Activated T-helper 2 cell treated with anti-CD3 and anti-CD28 coated beads, Interferon-gamma antibody, Interleukin-2, Interleukin-4, amounts not matched to agents 10 μg/mL and 5 μg/mL and 100 μg/mL, durations not matched to agents 14 hours and 24 hours and 36 hours (primary cell): ENCODE measurements at regions of chr18 and their contacts with region 1.

Region 1: GRCh38 chr18:29041976-29042375 is 865.0 kb upstream of the CDH2 start:
- DNase-seq: no peak
- H3K4me3 Mint-ChIP-seq: no peak overlapping the region
- H3K27ac Mint-ChIP-seq: no peak overlapping the region
- H3K4me1 Mint-ChIP-seq: no peaks in the 10 kb centered on the region
- H3K27me3 Mint-ChIP-seq: no peaks in the 10 kb centered on the region

Region 2: DNA sequence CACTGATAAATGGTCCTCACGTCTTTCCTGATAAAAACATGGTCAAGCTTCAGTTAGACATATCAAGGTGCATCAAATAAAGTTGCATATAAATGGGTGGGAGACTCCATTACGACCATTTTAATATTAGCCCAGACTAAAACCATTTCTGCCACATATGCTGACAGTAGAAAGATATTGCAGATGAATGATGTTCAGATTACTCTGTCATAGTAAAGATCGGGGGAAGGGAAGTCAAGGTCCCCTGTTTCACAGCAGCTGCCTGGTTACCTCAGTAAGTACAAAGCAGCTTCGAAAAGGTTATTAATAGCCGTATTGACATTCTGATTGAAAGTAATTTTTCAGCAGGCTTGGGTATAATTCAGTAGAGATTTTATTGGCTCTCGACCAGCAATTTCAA is 62.7 kb after region 1 on chr18:
- intact Hi-C with region 1: loop called (anchors 10 kb)
- DNase-seq: no peak
- H3K4me3 Mint-ChIP-seq: no peak overlapping the region
- H3K27ac Mint-ChIP-seq: no peak overlapping the region
- H3K4me1 Mint-ChIP-seq: no peaks in the 10 kb centered on the region
- H3K27me3 Mint-ChIP-seq: no peaks in the 10 kb centered on the region